Activated naive CD4-positive, alpha-beta T cell treated with anti-CD3 and anti-CD28 coated beads for 36 hours (primary cell): ENCODE measurements at regions of chr17 and their contacts with region 1.

Region 1: DNA sequence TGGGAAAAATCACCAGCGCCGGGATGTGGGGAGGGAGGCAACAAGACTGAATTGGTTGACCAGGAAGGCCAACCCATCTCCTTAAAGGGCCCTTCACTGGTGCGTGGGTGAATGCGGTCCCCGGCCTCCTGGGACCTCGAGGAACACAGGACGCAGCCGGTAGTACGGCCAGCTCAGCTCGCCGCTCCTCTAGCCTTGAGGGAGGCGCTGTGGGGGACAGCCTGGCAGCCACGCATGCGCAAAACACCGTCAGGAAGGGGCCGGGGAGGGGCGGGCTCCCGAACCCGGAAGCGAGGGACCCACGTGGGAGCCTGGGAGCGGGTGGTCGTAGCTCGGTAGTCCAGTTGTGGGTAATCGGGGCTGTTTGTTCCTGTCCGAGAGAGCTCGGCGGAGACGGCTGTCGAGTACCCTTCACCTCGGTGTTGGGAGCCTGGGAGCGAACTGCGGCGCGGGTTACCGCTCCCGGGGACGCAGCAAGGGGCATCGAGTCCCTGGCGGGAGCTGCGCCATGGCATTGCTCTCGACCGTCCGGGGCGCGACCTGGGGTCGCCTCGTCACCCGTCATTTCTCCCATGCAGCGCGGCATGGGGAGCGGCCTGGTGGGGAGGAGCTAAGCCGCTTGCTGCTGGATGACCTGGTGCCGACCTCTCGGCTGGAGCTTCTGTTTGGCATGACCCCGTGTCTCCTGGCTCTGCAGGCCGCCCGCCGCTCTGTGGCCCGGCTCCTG is at the start of gene MRM1:
- DNase-seq: peak; percentile 88
- H3K4me3 Mint-ChIP-seq: peak within 1 kb of the TSS; percentile 87
- H3K27ac Mint-ChIP-seq: peak within 1 kb of the TSS; percentile 85
- H3K4me1 Mint-ChIP-seq: peaks cover 34% of the 10 kb centered on the region
- H3K27me3 Mint-ChIP-seq: no peaks in the 10 kb centered on the region
- total RNA-seq, gene MRM1: 11.0 to 11.3 TPM

Region 2: GRCh38 chr17:36486204-36487194 is 115.0 kb before region 1 on chr17 and contains the start of gene ZNHIT3:
- CTCF ChIA-PET with region 1: no interaction called
- intact Hi-C with region 1: loop called (anchors 2 kb)
- DNase-seq: peak; percentile 95
- H3K4me3 Mint-ChIP-seq: peak within 1 kb of the TSS; percentile 100
- H3K27ac Mint-ChIP-seq: peak within 1 kb of the TSS; percentile 98
- H3K4me1 Mint-ChIP-seq: peaks cover 51% of the 10 kb centered on the region
- H3K27me3 Mint-ChIP-seq: peaks cover 10% of the 10 kb centered on the region
- total RNA-seq, gene ZNHIT3: 39.0 to 43.7 TPM

Region 3: DNA sequence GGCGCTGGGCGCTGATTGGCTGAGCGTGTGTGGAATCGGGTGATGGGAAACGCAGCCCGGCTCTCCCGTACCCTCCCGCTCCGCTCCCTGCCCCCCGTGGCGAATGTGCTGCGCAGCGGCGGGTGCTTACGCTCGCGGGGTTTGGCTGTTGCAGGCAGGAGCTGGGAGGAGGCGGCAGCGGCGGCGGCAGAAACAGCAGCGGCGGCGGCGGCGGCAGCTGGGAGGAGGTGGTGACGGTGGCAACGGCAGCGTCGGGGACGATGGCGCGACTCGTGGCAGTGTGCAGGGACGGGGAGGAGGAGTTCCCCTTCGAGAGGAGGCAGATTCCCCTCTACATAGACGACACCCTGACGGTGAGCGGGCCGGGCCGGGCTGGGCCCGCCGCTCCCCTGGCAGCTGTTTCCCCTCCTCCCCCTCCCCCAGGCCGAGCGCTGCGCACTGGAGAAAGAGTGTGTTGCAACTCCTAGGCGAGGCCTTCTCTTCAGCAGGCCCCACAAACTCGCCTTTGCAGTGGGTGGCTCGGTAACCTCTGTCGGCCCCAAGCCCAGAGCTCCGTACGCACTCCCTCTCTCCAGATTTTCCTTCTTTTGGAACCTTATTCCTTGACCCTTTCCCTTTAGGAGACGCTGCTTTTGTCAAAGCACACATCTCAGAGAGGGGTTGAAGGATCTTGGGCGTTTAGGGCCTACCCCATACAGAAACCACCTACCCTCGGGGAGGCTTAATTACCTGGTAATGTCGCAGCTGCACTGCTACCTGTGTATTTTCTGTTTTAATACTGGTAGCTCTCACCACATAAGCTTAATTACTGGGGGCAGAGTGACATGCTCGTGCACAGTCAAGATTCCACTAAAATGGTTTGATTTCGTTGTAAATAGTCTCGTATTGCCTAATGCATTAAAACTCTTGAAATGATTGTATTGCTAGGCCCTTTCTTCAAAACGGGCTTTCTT is 55.7 kb before region 1 on chr17:
- CTCF ChIA-PET with region 1: interaction called, 6 read pairs
- intact Hi-C with region 1: loop called (anchors 2 kb)
- DNase-seq: peak; percentile 98
- H3K4me3 Mint-ChIP-seq: peak overlapping the region; percentile 86
- H3K27ac Mint-ChIP-seq: peak overlapping the region; percentile 94
- H3K4me1 Mint-ChIP-seq: peaks cover 44% of the 10 kb centered on the region
- H3K27me3 Mint-ChIP-seq: no peaks in the 10 kb centered on the region

Region 4: GRCh38 chr17:37047631-37048104 is 446.2 kb after region 1 on chr17:
- CTCF ChIA-PET with region 1: interaction called, 15 read pairs
- intact Hi-C with region 1: no loop called
- DNase-seq: peak; percentile 92
- H3K4me3 Mint-ChIP-seq: no peak overlapping the region
- H3K27ac Mint-ChIP-seq: no peak overlapping the region
- H3K4me1 Mint-ChIP-seq: peaks cover 12% of the 10 kb centered on the region
- H3K27me3 Mint-ChIP-seq: no peaks in the 10 kb centered on the region

Region 5: DNA sequence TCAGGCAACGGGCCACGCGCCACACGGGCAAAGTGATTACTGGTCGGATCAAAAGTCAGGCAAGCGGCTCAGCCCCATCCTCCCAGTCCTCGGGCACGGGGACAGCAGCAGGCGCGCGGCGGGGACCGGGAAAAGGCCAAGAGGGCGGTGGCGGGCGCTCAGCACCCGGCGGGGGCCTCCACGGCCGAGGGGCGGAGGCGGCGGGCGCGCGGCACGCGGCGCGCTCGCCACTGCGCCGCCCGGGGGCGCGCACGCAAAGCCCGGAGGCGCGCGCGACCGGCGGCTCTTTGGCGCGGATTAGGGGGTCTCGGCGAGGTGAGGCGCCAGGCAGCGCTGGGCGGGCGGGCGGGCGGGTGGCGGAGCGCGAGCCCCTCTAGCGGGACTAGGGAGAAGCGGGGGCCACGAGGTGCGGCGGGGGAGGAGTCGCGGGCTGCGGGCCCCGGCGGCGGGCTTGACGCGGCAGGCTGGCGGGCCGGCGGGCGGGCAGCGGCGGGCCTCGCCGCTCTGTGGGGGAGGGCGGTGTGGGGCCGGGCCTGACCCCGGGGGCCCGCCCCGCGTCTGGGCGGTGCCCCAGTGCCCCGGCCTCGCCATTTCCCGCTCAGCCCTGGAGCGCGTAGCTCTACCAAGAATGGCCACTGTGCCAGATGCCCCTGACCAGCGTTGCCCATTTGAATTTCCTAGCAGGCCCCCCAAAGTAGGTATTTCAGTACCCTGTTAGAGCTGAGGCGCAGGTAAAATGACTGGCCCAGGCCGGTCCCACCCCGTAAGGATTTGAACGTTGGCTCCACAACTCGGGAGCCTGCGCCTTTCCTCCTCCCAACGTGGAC is 805.4 kb after region 1 on chr17 and contains the starts of genes ACACA and TADA2A:
- CTCF ChIA-PET with region 1: no interaction called
- intact Hi-C with region 1: loop called (anchors 1 kb)
- DNase-seq: peak; percentile 74
- H3K4me3 Mint-ChIP-seq: peak within 1 kb of the TSS; percentile 97
- H3K27ac Mint-ChIP-seq: peak within 1 kb of the TSS; percentile 95
- H3K4me1 Mint-ChIP-seq: peaks cover 58% of the 10 kb centered on the region
- H3K27me3 Mint-ChIP-seq: no peaks in the 10 kb centered on the region
- total RNA-seq, gene ACACA: 52.6 to 59.8 TPM
- total RNA-seq, gene TADA2A: 27.3 to 29.5 TPM